ENCODE measurements at regions of chr14 and their contacts with region 1.

Region 1: DNA sequence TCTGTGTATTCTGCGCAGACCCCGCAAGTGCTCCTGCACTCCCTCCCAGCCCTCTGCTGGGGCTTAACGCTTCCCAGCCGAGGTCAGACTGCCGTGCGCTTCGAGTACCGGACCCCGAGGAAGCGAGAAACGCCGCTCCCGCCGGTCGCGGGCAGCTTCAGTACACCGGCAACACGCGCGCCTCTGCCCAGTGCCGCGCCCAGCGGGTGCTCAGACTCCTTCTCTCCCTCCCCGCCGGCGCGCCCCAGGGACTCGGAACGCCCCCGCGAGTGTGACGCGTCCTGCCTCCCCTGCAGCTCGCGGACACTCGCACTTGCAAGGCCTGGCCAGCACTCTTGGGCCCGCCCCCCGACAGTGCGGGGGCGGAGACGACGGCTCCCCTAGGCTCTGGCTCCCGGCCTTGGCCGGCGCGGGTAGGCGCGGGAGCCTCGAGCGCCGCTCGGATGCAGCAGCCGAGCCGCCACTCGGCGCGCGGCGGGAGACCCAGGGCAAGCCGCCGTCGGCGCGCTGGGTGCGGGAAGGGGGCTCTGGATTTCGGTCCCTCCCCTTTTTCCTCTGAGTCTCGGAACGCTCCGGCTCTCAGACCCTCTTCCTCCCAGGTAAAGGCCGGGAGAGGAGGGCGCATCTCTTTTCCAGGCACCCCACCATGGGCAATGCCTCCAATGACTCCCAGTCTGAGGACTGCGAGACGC is at the start of gene PTGER2:
- DNase-seq: peak; percentile 33 to 91 (median 58)
- ATAC-seq: peak; percentile 64
- H3K4me3 ChIP-seq: peak within 1 kb of the TSS; percentile 97
- H3K4me3 Mint-ChIP-seq: peak within 1 kb of the TSS; percentile 97
- H3K27ac ChIP-seq: peak within 1 kb of the TSS; percentile 27 to 74
- H3K27ac Mint-ChIP-seq: peak within 1 kb of the TSS; percentile 77
- H3K4me1 ChIP-seq: peaks cover 62% of the 10 kb centered on the region
- H3K4me1 Mint-ChIP-seq: peaks cover 67% of the 10 kb centered on the region
- H3K27me3 ChIP-seq: no peaks in the 10 kb centered on the region
- H3K27me3 Mint-ChIP-seq: peaks cover 47% of the 10 kb centered on the region
- CTCF ChIP-seq: no peak
- total RNA-seq, gene PTGER2: 4.3 to 4.8 TPM

Region 2: GRCh38 chr14:52351233-52352060 is 37.4 kb after region 1 on chr14:
- CTCF ChIA-PET with region 1: no interaction called
- POLR2A ChIA-PET with region 1: interaction called, 10 read pairs
- intact Hi-C with region 1: no loop called
- DNase-seq: peak in 2 of 14 experiments; percentile 19 to 23
- ATAC-seq: peak; percentile 37
- H3K4me3 ChIP-seq: peak overlapping the region; percentile 31
- H3K4me3 Mint-ChIP-seq: peak overlapping the region; percentile 46
- H3K27ac ChIP-seq: peak overlapping the region; percentile 42 to 67
- H3K27ac Mint-ChIP-seq: peak overlapping the region; percentile 81
- H3K4me1 ChIP-seq: peaks cover 47% of the 10 kb centered on the region
- H3K4me1 Mint-ChIP-seq: peaks cover 55% of the 10 kb centered on the region
- H3K27me3 ChIP-seq: no peaks in the 10 kb centered on the region
- H3K27me3 Mint-ChIP-seq: no peaks in the 10 kb centered on the region
- CTCF ChIP-seq: no peak

Region 3: DNA sequence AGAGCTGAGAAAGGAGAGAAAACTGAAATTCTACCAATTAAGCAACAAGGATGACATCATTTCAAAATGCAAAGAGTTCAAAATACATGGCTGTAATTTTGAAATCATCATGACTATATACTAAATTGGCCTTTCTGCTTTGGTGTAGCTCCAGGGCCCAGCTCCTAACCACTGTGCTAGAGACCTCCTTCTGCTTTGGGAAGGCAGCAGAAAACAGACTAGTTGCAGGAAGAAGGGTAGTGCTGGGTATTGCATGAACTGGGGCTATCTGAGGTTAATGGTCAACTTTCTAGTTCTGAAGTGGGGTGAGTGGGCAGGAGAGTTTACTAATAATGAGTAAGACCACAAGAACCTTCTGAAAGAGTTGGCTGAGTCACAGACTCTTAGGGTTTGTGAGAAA is 66.2 kb after region 1 on chr14:
- CTCF ChIA-PET with region 1: no interaction called
- POLR2A ChIA-PET with region 1: no interaction called
- intact Hi-C with region 1: no loop called
- DNase-seq: no peak
- ATAC-seq: no peak
- H3K4me3 ChIP-seq: no peak overlapping the region
- H3K4me3 Mint-ChIP-seq: no peak overlapping the region
- H3K27ac ChIP-seq: no peak overlapping the region
- H3K27ac Mint-ChIP-seq: no peak overlapping the region
- H3K4me1 ChIP-seq: peaks cover 10% of the 10 kb centered on the region
- H3K4me1 Mint-ChIP-seq: no peaks in the 10 kb centered on the region
- H3K27me3 ChIP-seq: no peaks in the 10 kb centered on the region
- H3K27me3 Mint-ChIP-seq: no peaks in the 10 kb centered on the region
- CTCF ChIP-seq: no peak

Region 4: GRCh38 chr14:52402812-52403526 is 88.9 kb after region 1 on chr14:
- CTCF ChIA-PET with region 1: interaction called, 3 read pairs
- POLR2A ChIA-PET with region 1: interaction called, 3 read pairs
- intact Hi-C with region 1: loop called in 1 of 2 experiments (anchors 10 kb)
- DNase-seq: peak in 5 of 14 experiments; percentile 1 to 69 (median 34)
- ATAC-seq: peak; percentile 41
- H3K4me3 ChIP-seq: no peak overlapping the region
- H3K4me3 Mint-ChIP-seq: no peak overlapping the region
- H3K27ac ChIP-seq: no peak overlapping the region
- H3K27ac Mint-ChIP-seq: peak overlapping the region; percentile 1
- H3K4me1 ChIP-seq: peaks cover 38% of the 10 kb centered on the region
- H3K4me1 Mint-ChIP-seq: peaks cover 55% of the 10 kb centered on the region
- H3K27me3 ChIP-seq: no peaks in the 10 kb centered on the region
- H3K27me3 Mint-ChIP-seq: no peaks in the 10 kb centered on the region
- CTCF ChIP-seq: no peak